Left cardiac atrium (tissue), 4 donors: ENCODE measurements at regions of chr1 and their contacts with region 1.

Region 1: DNA sequence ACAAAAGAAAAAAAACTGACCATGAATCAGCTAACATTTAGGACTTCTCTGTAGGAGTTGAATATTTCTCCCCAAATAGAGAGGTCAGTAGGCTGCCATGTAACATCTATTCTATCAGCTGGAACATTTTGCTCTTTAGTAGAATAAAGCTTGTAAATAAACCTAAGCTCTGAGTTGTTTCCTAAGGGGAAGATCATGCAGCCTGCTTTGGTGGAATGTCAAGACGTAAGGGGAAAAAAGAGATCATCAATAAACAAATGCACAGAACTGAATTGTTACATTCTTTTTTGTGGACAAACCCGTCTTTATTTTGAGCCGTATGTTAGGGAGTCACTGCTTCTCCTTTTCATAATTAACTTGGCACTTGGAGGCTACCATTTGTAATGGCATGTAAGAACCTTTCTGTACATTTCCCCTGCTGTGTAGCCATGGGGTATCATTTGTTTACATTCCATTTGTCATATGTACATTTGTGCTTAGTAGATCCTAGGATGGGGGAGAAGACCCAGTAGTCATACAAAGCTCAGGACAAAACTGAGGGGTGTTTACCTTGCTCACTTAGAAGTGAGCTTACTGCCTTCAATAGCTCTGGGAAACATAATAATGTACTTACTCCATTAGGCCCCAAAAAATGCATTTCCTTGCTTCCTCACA is 10.8 kb upstream of the PALMD start:
- DNase-seq: no peak
- ATAC-seq: no peak

Region 2: DNA sequence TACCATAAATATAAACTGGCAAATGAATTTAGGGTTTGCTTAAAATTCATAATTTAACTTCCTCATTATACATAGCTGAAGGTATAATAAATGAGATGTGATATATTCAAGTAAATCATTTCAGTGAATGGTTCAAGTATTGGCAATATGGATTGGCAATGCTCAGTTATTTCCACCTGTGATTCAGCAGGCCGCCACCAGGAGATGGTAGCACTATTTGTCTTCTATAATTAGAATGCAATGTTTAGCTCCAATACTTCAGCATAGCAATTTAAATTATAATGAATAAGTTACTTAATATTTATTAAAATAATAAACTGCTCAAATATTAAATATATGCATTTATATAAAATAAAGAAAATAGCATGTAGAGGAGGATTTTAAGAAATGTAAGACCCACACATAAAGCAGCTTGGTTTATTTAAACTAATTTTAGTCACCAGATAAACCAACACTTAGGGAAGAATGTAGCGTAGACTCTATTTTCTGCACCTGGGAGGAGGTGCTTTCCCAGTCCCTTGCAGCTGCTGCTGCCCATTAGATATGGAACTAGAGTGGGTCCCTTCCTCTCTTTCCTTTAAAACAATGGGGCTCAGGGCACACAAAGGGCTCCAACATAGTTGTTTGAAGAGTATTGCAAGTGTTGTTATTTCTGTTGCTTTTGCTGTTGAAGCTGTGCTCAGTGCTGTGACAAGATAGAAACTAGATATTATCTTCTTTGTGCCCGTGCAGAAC is 308.7 kb before region 1 on chr1:
- intact Hi-C with region 1: no loop called
- DNase-seq: no peak
- ATAC-seq: no peak

Region 3: DNA sequence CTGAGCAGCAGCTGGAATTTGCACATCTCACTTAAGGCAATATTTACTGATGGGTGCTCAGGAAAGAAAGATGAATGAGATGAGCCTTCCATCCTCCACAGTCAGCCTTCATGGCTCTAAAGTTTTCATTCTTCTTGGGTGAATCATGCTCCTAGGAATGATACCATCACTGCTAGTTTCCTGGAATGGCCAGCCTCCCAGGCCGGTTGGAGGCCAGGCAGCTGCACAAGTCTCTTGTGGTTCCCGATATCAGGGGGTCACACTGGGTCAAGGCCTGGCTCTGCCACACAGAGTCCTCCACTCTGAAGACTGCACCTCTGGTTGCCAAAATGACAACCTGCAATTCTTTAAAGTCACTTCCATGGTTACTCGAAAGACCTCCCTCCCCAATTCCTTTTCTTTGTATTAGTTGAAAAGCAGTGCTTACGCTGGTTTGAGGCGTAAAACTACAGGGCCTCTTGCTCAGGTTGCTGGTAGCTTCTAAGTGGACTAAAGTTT is 35.4 kb before region 1 on chr1:
- intact Hi-C with region 1: loop called in 1 of 2 experiments (anchors 5 kb)
- DNase-seq: peak; percentile 71
- ATAC-seq: peak; percentile 29 to 92